GM12878 (cell line): ENCODE measurements at regions of chr6 and their contacts with region 1.

Region 1: DNA sequence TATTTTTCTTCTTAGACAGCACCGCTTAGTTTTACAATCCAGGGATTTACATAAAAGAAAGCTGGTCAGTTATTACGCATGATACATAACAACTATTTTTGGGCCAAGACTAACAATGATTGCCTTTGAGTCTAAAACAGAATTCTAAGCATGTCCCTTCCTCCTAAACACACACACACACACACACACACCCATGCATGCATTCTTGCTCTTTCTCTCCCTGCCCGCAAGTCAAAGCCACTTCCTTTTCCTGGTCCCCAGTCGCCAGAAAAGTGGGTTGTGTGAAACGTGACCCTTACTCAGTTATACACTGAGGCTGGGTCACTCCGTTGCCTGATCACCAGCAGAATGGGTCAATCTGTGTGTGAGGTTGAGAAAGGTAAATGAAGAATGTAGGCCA is 31.4 kb downstream of the FYN start:
- DNase-seq: peak; percentile 60
- ATAC-seq: no peak
- H3K4me3 ChIP-seq: no peak overlapping the region; the same call in 1 of the 2 replicates
- H3K27ac ChIP-seq: peak overlapping the region; percentile 72
- H3K4me1 ChIP-seq: peaks cover 82% of the 10 kb centered on the region
- H3K27me3 ChIP-seq: no peaks in the 10 kb centered on the region
- CTCF ChIP-seq: no peak
- EP300 ChIP-seq: peak; percentile 36 to 52; a peak in 2 of 4 replicates
- POLR2A ChIP-seq: no peak
- RAD21 ChIP-seq: no peak

Region 2: DNA sequence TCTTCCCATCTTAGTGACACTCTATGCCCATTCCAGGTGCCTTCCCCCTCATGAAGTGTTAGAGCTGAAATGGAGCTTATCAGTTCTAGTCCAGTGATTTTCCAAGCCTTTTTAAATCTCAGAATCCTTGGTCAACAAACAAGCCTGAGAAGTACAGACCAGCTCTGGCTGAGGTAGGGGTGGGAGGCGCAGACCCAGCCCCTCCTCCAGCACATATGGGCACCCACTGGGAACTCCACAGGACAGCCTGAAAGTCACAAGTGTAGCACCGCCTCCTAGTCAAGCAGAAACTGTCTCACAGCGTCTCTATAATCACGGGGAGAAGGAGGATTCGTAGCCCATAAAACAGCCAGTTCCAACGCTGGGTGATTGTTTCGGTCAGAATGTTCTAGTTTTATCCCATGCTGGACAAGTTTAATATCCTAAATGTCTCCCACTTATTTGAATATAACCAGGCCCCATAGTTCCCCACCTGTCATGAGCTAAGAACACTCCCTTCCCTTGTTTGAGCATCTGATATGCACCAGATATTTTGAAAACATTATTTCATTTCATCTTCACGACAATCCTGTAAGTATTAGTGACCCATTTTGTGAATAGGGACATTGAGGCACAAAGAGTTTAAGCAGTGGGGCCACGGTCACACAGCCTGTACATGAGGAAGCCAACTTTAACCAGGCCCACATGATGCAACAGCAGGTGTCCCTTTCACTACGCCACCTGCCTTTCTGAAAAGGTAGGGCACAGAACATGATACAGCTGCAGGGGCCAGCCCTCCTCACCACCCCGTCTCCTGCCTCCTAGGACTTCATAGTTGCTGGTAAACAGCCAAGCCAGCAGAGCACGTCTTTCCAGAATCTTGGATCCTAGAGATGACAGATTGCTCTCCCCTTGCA is 276.2 kb before region 1 on chr6:
- CTCF ChIA-PET with region 1: no interaction called
- POLR2A ChIA-PET with region 1: no interaction called
- RAD21 ChIA-PET with region 1: no interaction called
- SMC1A ChIA-PET with region 1: no interaction called
- in situ Hi-C with region 1: no loop called
- intact Hi-C with region 1: no loop called
- DNase-seq: no peak
- ATAC-seq: peak; percentile 96
- H3K4me3 ChIP-seq: no peak overlapping the region
- H3K27ac ChIP-seq: peak overlapping the region; percentile 53
- H3K4me1 ChIP-seq: peaks cover 15% of the 10 kb centered on the region
- H3K27me3 ChIP-seq: no peaks in the 10 kb centered on the region
- CTCF ChIP-seq: peak; percentile 41 to 47 (median 46); a peak in 5 of 6 replicates
- EP300 ChIP-seq: no peak
- POLR2A ChIP-seq: peak; percentile 50
- RAD21 ChIP-seq: peak; percentile 59

Region 3: GRCh38 chr6:111737065-111737521 is 104.7 kb before region 1 on chr6:
- CTCF ChIA-PET with region 1: interaction called, 3 read pairs
- POLR2A ChIA-PET with region 1: interaction called, 4 read pairs
- RAD21 ChIA-PET with region 1: interaction called, 19 read pairs
- SMC1A ChIA-PET with region 1: interaction called, 15 read pairs
- in situ Hi-C with region 1: no loop called
- intact Hi-C with region 1: no loop called
- DNase-seq: no peak
- ATAC-seq: no peak
- H3K4me3 ChIP-seq: no peak overlapping the region
- H3K27ac ChIP-seq: 0 out of 2 replicates have a peak overlapping the region, but pooled peaks have one; percentile 6
- H3K4me1 ChIP-seq: peaks cover 80% of the 10 kb centered on the region
- H3K27me3 ChIP-seq: no peaks in the 10 kb centered on the region
- CTCF ChIP-seq: no peak
- EP300 ChIP-seq: no peak
- POLR2A ChIP-seq: no peak
- RAD21 ChIP-seq: no peak

Region 4: GRCh38 chr6:111750753-111751684 is 90.8 kb before region 1 on chr6:
- CTCF ChIA-PET with region 1: interaction called, 5 read pairs
- POLR2A ChIA-PET with region 1: interaction called, 4 read pairs
- RAD21 ChIA-PET with region 1: interaction called, 17 read pairs
- SMC1A ChIA-PET with region 1: interaction called, 11 read pairs
- in situ Hi-C with region 1: no loop called
- intact Hi-C with region 1: no loop called
- DNase-seq: no peak
- ATAC-seq: peak; percentile 83
- H3K4me3 ChIP-seq: no peak overlapping the region
- H3K27ac ChIP-seq: peak overlapping the region; percentile 85
- H3K4me1 ChIP-seq: peaks cover 69% of the 10 kb centered on the region
- H3K27me3 ChIP-seq: no peaks in the 10 kb centered on the region
- CTCF ChIP-seq: no peak
- EP300 ChIP-seq: peak; percentile 27 to 70; a peak in 2 of 4 replicates
- POLR2A ChIP-seq: no peak
- RAD21 ChIP-seq: peak; percentile 19; the same call in 1 of the 2 replicates

Region 5: GRCh38 chr6:111793711-111794111 is 48.1 kb before region 1 on chr6:
- CTCF ChIA-PET with region 1: interaction called, 4 read pairs
- POLR2A ChIA-PET with region 1: interaction called, 6 read pairs
- RAD21 ChIA-PET with region 1: interaction called, 9 read pairs
- SMC1A ChIA-PET with region 1: interaction called, 20 read pairs
- in situ Hi-C with region 1: no loop called
- intact Hi-C with region 1: no loop called
- DNase-seq: no peak
- ATAC-seq: peak; percentile 82
- H3K4me3 ChIP-seq: peak overlapping the region; percentile 66
- H3K27ac ChIP-seq: peak overlapping the region; percentile 85
- H3K4me1 ChIP-seq: peaks cover 36% of the 10 kb centered on the region
- H3K27me3 ChIP-seq: no peaks in the 10 kb centered on the region
- CTCF ChIP-seq: no peak
- EP300 ChIP-seq: no peak
- POLR2A ChIP-seq: peak; percentile 56
- RAD21 ChIP-seq: no peak

Region 6: DNA sequence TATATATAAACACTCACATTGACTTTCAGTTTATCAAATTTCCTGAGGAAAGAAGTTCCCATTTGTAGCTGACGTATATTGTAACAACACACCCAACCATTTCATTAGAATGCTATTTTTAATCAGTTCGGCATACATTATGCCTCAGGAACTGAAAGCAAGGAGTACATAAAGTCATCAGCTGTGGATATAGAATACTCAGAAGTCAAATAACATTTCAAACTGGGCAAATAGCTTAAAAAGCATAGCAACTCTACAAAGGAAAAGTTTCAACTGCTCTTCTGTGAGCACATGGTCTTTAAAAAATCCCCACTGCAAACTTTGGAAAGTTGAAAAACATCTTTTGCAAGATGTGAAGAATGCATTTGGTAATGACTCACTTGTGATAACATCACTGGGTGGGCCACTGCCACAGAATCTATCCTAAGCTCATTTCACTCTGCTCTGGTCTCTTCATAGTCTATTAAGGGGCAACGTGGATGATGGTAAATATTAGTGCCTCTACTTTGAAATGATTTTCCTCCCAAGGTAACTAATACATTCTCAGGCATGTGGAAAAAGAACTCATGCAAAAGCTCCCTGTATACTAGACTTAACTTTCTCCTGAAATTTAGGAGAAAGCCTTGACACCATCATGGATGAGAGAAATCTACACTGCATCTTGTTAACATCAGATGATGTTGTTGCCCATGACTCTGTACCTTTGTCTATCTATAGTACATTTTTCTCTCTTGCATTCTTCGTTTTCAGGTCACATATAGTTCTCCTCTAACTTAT is 17.8 kb before region 1 on chr6:
- CTCF ChIA-PET with region 1: interaction called, 4 read pairs
- POLR2A ChIA-PET with region 1: interaction called, 16 read pairs
- RAD21 ChIA-PET with region 1: interaction called, 44 read pairs
- SMC1A ChIA-PET with region 1: interaction called, 92 read pairs
- in situ Hi-C with region 1: no loop called
- intact Hi-C with region 1: no loop called
- DNase-seq: no peak
- ATAC-seq: peak; percentile 73
- H3K4me3 ChIP-seq: peak overlapping the region; percentile 45
- H3K27ac ChIP-seq: peak overlapping the region; percentile 57
- H3K4me1 ChIP-seq: peaks cover 32% of the 10 kb centered on the region
- H3K27me3 ChIP-seq: no peaks in the 10 kb centered on the region
- CTCF ChIP-seq: no peak
- EP300 ChIP-seq: no peak
- POLR2A ChIP-seq: no peak
- RAD21 ChIP-seq: no peak

Region 7: DNA sequence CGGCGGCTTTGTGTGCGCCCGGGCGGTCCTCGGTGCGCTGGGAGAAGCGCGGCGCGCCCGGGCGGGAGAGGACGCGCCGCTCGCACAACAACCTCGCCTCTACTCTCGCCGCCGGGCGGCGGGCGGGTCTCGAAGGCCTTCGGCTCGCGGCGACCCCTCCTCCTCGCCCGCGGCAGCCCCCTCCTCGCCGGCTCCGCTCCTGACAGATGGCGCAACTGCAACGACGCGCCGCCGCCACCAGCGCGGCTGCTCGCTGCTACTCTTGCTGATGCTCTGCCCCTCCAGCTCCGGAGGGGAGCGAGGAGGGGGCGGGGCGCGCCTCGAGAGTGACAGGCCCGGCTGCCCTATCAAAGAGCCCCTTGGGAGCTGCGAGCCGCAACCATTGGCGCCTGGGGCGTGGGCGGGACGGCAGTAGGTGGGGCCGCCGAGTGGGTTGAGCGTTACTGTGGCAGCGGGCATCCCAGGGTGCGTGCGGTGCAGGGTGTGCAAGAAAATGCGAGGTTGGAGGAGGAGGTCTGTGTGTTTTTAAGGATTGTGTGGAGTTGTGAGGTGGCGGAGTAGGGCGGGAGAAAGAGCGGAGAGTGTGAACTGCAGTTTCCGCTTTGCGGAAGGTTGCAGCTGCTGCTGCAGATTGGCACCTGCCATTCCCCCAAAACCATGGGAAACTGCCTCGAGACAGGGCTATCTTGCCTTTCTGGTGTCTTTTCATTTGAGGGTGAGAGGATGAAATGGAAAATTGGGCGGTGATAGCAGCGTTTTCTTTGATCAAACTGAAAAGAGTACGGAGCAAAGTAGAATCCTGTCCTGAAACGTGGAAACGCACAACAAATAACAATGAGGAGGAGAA is 31.6 kb after region 1 on chr6 and contains the start of gene FYN:
- CTCF ChIA-PET with region 1: interaction called, 11 read pairs
- POLR2A ChIA-PET with region 1: interaction called, 7 read pairs
- RAD21 ChIA-PET with region 1: interaction called, 49 read pairs
- SMC1A ChIA-PET with region 1: interaction called, 20 read pairs
- in situ Hi-C with region 1: no loop called
- intact Hi-C with region 1: loop called (anchors 2 kb)
- DNase-seq: peak; percentile 76
- ATAC-seq: peak; percentile 92
- H3K4me3 ChIP-seq: peak within 1 kb of the TSS; percentile 98
- H3K27ac ChIP-seq: peak within 1 kb of the TSS; percentile 76
- H3K4me1 ChIP-seq: peaks cover 5% of the 10 kb centered on the region
- H3K27me3 ChIP-seq: no peaks in the 10 kb centered on the region
- CTCF ChIP-seq: peak; percentile 28 to 65 (median 30); a peak in 5 of 6 replicates
- EP300 ChIP-seq: no peak
- POLR2A ChIP-seq: peak; percentile 95
- RAD21 ChIP-seq: peak; percentile 48
- polyA plus RNA-seq, gene FYN: 51.4 to 55.1 TPM

Region 8: DNA sequence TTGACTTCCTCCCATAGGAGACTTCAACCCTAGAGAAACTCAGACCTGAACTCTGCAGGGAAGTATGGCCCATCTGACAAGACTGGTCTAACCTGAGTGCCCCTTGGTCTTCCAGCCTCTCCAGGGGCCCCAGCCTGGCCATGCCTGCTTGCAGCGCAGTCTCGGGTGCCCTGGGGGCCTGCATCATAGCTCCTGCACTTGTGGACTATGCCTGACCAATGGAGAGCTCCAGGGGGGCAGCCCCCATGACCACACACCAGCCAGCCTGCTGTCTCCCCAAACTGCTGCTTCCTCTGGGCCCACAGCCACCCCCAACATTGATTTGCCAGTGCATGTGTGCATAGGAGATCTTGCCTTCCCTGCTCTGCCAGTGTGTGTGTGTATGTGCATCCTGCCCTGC is 1406.7 kb after region 1 on chr6:
- CTCF ChIA-PET with region 1: no interaction called
- POLR2A ChIA-PET with region 1: no interaction called
- RAD21 ChIA-PET with region 1: no interaction called
- SMC1A ChIA-PET with region 1: no interaction called
- in situ Hi-C with region 1: no loop called
- intact Hi-C with region 1: no loop called
- DNase-seq: no peak
- ATAC-seq: no peak
- H3K4me3 ChIP-seq: no peak overlapping the region
- H3K27ac ChIP-seq: no peak overlapping the region
- H3K4me1 ChIP-seq: no peaks in the 10 kb centered on the region
- H3K27me3 ChIP-seq: no peaks in the 10 kb centered on the region
- CTCF ChIP-seq: no peak
- EP300 ChIP-seq: no peak
- POLR2A ChIP-seq: no peak
- RAD21 ChIP-seq: no peak